ENCODE measurements at regions of chr6 and their contacts with region 1.

Region 1: DNA sequence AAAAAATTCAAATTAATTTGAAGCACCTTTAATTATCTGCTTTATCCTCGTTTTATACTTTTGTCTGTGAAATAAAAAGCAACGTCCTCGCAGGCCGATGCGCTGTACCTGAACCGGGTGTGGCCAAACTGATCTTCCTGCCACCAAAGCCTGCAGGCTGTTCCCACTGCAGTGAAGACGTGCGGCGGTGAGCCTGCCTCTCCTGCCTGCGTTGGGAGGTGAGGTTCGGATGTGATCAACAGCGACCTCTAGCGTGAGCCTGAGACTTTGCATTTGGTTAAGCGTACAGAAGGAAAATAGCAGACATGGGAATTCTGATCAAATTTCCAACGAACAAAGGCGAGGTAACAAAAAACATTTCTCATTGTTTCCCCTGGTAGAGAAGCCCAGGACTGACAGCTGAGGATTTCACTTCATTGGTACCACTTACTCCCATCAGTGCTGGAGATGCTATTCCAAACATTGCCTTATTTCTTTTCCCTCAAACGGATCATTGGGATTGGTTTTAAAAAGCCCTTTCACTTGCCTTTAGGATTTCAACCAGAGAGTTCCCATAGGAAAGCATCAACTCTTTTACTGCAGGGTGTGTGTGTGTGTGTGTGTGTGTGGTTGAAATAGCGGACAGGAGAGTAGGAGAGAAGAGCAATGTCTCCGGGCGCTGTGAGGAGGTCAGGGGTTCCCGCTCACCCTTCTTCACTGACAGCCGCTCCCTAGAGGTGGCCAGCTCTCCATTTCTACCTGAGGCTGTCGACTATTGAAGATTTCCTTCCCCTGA is 56.6 kb upstream of the CCN6 start:
- DNase-seq: peak; percentile 85
- ATAC-seq: peak; percentile 95
- H3K4me3 Mint-ChIP-seq: peak overlapping the region; percentile 9; the same call in 1 of the 2 replicates
- H3K27ac Mint-ChIP-seq: no peak overlapping the region
- H3K4me1 Mint-ChIP-seq: peaks cover 19% of the 10 kb centered on the region
- H3K27me3 Mint-ChIP-seq: no peaks in the 10 kb centered on the region; the same call in none of the 2 replicates
- CTCF ChIP-seq: peak; percentile 86

Region 2: GRCh38 chr6:111709615-111710398 is 287.5 kb before region 1 on chr6:
- CTCF ChIA-PET with region 1: interaction called, 17 read pairs
- POLR2A ChIA-PET with region 1: no interaction called
- DNase-seq: no peak
- ATAC-seq: peak; percentile 82
- H3K4me3 Mint-ChIP-seq: no peak overlapping the region
- H3K27ac Mint-ChIP-seq: no peak overlapping the region
- H3K4me1 Mint-ChIP-seq: peaks cover 29% of the 10 kb centered on the region
- H3K27me3 Mint-ChIP-seq: no peaks in the 10 kb centered on the region
- CTCF ChIP-seq: peak; percentile 46

Region 3: GRCh38 chr6:111978532-111979149 is 18.6 kb before region 1 on chr6:
- CTCF ChIA-PET with region 1: no interaction called
- POLR2A ChIA-PET with region 1: no interaction called
- DNase-seq: no peak
- ATAC-seq: no peak
- H3K4me3 Mint-ChIP-seq: no peak overlapping the region
- H3K27ac Mint-ChIP-seq: no peak overlapping the region
- H3K4me1 Mint-ChIP-seq: peaks cover 10% of the 10 kb centered on the region; the same call in 1 of the 2 replicates
- H3K27me3 Mint-ChIP-seq: peaks cover 22% of the 10 kb centered on the region
- CTCF ChIP-seq: no peak

Measured in WTC11 (cell line).